Heart right ventricle (tissue), 16 donors: ENCODE measurements at regions of chr10 and their contacts with region 1.

Region 1: GRCh38 chr10:79068562-79069324 is at the start of gene ZMIZ1:
- DNase-seq: peak; percentile 87 to 93
- ATAC-seq: peak in 7 of 8 donors; percentile 18 to 57 (median 36)
- H3K4me3 ChIP-seq: peak within 1 kb of the TSS; percentile 71 to 98 (median 92)
- H3K27ac ChIP-seq: peak within 1 kb of the TSS; percentile 97 to 100 (median 99)
- H3K4me1 ChIP-seq: peaks cover 21 to 51% (median 37%) of the 10 kb centered on the region in 9 donors
- H3K27me3 ChIP-seq: no peaks in the 10 kb centered on the region
- CTCF ChIP-seq: peak in 5 of 9 donors; percentile 6 to 54 (median 37)
- total RNA-seq, gene ZMIZ1: 40.4 to 61.5 (median 50.8) TPM

Region 2: GRCh38 chr10:78302989-78303854 is 765.5 kb before region 1 on chr10:
- intact Hi-C with region 1: loop called in 4 of 10 experiments (anchors 5 to 10 kb)
- DNase-seq: peak; percentile 93 to 97
- ATAC-seq: peak; percentile 94 to 99 (median 97)
- H3K4me3 ChIP-seq: peak overlapping the region; percentile 33 to 70 (median 59)
- H3K27ac ChIP-seq: peak overlapping the region; percentile 68 to 97 (median 88)
- H3K4me1 ChIP-seq: peaks cover 3 to 28% (median 11%) of the 10 kb centered on the region in 9 donors
- H3K27me3 ChIP-seq: no peaks in the 10 kb centered on the region
- CTCF ChIP-seq: peak; percentile 60 to 78 (median 71)

Region 3: DNA sequence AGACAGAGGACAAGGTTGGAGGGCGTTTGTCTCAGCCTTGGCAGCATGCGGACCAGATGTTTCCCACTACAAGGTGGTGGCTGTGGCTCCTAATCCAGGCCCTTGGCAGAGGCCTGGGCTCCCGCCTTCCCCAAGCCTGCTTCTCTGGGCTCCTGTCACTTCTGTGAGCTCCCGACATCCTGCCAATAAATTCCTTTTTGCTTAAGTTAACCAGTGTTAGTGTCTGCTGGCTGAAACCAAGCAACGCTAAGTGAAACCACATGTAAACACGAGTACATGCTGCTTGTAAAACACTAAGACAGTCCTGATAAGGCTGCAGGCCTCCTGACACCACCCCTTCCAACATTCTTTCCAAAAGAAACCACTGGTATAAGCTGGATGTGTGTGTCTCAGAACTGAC is 263.6 kb before region 1 on chr10:
- intact Hi-C with region 1: loop called in 3 of 10 experiments (anchors 5 to 10 kb)
- DNase-seq: peak; percentile 77 to 78
- ATAC-seq: peak; percentile 85 to 93 (median 88)
- H3K4me3 ChIP-seq: no peak overlapping the region
- H3K27ac ChIP-seq: peak overlapping the region in 9 of 10 donors; percentile 25 to 89 (median 74)
- H3K4me1 ChIP-seq: peaks cover 20 to 71% (median 46%) of the 10 kb centered on the region in 9 donors
- H3K27me3 ChIP-seq: no peaks in the 10 kb centered on the region
- CTCF ChIP-seq: no peak

Region 4: DNA sequence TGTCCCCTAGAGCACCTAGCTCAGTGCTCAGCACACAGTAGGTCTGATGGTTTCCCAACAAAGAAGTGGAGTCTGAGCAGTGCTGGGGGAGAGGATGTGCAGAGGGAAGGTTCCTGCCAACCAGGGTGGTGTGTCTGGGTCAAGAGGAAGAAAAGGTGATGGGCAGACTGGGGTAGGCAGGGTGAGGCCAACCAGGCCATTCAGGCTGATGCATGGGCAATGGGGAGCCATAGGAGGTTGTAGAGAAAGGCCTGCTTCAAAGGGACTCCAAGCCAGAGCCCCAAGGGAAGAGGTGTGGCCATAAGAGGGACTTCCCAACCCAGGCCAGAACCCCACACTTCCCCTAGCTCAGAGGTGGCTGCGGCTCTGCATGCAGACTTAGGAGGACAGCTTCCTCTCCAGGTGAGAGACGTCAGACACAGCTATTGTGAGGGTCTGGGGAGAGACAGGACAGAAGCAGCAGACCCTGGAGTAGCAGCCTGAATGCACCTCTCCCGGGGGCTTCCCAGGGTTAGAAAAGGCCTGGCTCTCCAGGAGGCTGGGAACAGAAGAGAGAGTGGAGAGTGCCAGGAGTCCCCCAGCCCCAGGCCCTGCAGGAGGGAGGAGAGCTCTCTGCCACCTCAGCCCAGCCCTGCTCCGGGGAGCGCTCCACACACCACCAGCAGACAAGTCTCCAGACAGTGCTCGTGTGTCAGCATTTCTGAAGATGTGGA is 87.3 kb before region 1 on chr10:
- intact Hi-C with region 1: loop called in 4 of 10 experiments (anchors 5 to 10 kb)
- DNase-seq: no peak
- ATAC-seq: peak in 4 of 8 donors; percentile 2 to 39 (median 16)
- H3K4me3 ChIP-seq: no peak overlapping the region
- H3K27ac ChIP-seq: no peak overlapping the region
- H3K4me1 ChIP-seq: peaks cover 0 to 20% (median 4%) of the 10 kb centered on the region in 9 donors
- H3K27me3 ChIP-seq: no peaks in the 10 kb centered on the region
- CTCF ChIP-seq: no peak

Region 5: DNA sequence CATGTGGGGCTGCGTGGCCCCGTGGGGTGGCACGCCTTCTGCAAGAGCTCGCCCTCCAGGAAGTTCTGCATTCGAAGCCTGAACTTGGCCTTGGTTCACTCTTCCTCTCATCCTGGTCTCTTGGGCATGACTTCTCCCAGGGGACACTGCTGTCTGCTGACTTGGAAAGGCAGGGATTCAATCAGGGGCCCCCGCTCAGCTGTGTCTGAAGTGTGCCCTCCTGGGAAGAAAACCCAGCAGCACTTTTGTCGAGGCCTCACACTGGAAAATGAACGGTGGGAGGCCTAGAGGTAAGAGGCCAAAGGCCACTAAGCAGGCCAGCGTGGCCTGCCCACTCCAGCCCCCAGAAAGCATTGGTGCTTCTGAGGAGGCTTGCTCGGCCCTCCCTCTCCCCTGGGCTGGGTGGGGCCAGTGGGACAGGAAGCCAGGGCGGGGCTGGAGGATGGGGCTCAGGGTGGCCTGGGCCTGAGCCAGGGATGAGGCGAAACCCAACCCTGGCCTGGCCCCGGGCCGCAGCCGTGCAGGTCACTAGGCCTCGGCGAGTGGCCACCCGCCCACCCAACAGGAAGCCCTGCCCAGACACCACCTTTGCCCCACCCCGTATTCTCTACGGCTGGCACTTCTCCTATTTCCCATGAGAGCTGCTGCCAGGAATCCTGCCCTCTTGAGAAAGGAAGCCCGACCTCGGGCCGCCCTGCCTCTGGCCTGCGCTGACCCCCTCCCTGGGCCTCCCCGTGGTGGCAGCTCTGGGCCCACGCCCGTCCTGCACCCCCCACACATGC is 81.1 kb after region 1 on chr10:
- intact Hi-C with region 1: loop called in 3 of 10 experiments (anchors 2 to 10 kb)
- DNase-seq: peak; percentile 86 to 90
- ATAC-seq: peak; percentile 54 to 74 (median 66)
- H3K4me3 ChIP-seq: peak overlapping the region in 2 of 10 donors; percentile 1 to 2
- H3K27ac ChIP-seq: peak overlapping the region; percentile 88 to 98 (median 93)
- H3K4me1 ChIP-seq: peaks cover 90 to 100% (median 100%) of the 10 kb centered on the region in 9 donors
- H3K27me3 ChIP-seq: no peaks in the 10 kb centered on the region
- CTCF ChIP-seq: no peak

Region 6: GRCh38 chr10:79185067-79185774 is 116.5 kb after region 1 on chr10:
- intact Hi-C with region 1: no loop called
- DNase-seq: peak in 1 of 2 donors; percentile 53
- ATAC-seq: peak in 2 of 8 donors; percentile 15 to 30
- H3K4me3 ChIP-seq: no peak overlapping the region
- H3K27ac ChIP-seq: peak overlapping the region; percentile 18 to 91 (median 58)
- H3K4me1 ChIP-seq: peaks cover 68 to 100% (median 99%) of the 10 kb centered on the region in 9 donors
- H3K27me3 ChIP-seq: no peaks in the 10 kb centered on the region
- CTCF ChIP-seq: no peak